ENCODE measurements at regions of chr12 and their contacts with region 1.

Region 1: DNA sequence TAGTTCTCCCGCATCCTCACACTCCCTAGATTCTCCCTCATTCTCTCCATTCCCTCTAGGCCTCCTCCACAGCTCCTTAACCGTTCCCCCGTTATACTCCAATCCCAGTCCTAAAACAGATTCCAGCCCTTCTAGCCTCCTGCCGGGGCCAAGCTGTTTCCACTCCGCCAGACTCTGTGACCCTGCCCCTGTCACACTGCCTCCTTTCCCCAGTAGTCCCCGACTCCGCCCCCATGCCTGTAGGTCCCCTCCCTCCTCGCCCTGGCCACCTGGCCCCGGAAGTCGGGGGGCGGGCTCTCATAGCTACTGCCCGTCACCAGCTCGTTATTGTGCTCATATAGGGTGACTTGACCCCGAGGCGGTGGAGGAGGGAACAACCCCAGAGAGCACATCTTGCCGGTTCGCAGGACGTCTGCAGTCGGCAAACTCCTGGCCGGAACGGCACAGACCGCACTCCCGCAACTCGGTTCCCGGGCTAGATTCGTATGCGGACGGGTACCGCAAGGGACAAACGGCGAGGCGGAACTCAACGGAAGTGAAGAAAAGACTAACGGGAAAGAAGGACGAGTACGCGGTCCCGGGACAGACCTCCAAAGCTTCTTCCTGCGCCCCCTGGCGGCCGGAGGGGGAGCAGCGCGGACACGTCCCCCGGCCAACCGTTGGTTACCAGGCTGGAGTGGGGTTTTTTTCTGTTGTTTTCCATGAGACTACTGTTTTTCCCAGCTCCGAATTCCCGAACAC is at the start of gene AAAS:
- DNase-seq: peak; percentile 72
- H3K4me3 ChIP-seq: peak within 1 kb of the TSS; percentile 97
- CTCF ChIP-seq: peak; percentile 99

Region 2: DNA sequence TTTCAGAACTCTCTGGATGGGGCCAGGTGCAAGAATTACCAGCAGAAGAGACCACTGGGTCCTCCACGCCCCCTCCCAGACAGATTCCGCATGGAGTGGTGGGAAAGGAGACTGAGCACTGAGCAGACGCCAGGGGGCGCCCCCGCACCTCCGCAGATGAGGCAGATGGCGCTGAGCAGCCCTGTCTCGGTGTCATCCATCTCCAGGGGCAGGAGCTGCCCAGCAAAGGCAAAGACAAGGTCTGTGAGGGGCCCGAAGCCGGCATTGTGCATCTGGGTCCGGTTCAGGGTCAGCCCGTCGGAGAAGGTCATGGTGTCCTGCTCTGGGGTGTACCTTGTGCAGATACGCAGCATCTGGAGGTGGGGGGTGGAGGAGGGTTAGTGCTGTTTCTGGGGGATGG is 107.9 kb before region 1 on chr12:
- CTCF ChIA-PET with region 1: interaction called, 187 read pairs
- POLR2A ChIA-PET with region 1: interaction called, 4 read pairs
- DNase-seq: no peak
- H3K4me3 ChIP-seq: no peak overlapping the region
- CTCF ChIP-seq: peak; percentile 98

Region 3: DNA sequence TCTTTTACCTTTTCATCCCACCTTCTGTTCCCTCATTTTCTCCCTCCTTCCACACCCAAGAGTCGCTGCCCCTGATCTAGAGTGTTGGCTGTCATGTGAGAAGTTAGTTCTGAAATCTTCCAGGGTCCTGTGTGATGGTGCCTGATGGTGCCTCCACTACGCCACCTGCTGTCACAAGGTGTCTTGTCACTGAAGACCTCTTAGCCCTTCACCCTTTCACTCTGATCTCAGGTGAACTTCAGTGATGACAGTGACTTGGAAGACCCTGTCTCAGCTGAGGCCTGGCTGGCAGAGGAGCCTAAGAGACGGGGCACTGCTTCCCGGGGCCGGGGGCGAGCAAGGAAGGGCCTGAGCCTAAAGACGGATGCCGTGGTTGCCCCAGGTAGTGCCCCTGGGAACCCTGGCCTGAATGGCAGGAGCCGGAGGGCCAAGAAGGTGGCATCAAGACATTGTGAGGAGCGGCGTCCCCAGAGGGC is 33.5 kb before region 1 on chr12:
- CTCF ChIA-PET with region 1: interaction called, 55 read pairs
- POLR2A ChIA-PET with region 1: interaction called, 6 read pairs
- DNase-seq: no peak
- H3K4me3 ChIP-seq: no peak overlapping the region
- CTCF ChIP-seq: peak; percentile 71

Region 4: GRCh38 chr12:53336181-53336681 is 15.0 kb after region 1 on chr12 and contains the start of gene SP7:
- CTCF ChIA-PET with region 1: interaction called, 31 read pairs
- POLR2A ChIA-PET with region 1: interaction called, 4 read pairs
- DNase-seq: no peak
- H3K4me3 ChIP-seq: no peak within 1 kb of the TSS
- CTCF ChIP-seq: no peak

Region 5: DNA sequence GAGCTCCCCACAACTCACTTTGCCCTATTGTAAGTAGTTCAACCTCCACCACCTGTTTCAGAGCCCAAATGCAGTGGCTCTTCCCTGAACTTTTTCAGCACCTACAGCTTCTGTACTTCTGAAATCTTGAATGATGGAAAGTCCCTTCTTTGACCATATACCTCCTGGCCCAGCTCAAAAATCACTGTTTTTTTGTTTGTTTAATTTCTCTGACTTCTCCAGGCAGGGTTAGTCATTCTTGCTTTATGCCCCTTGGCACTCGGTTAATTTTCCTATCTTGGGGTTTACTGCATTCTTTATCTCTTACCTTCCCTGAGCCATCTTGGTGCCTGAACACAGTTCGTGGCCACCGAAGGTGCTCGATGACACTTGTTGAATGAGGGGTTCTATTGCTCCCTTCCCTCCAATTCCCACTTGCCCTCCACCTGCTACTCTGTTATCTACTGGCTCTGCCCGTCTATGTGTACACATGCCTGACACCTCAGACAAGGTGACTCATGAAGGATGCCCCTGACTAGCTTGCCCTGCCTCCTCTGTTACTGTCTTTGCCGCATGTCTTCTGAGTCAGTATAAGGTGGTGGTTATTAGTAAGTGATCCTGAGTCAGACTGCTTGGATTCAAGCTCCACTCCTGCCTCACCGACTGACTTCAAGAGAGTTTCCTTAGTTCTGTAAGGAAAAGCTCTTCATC is 106.8 kb after region 1 on chr12:
- CTCF ChIA-PET with region 1: interaction called, 115 read pairs
- POLR2A ChIA-PET with region 1: no interaction called
- DNase-seq: peak; percentile 71
- H3K4me3 ChIP-seq: no peak overlapping the region
- CTCF ChIP-seq: no peak

Measured in AG04449 (cell line).